ENCODE measurements at regions of chr11 and their contacts with region 1.

Region 1: GRCh38 chr11:111538407-111539114 is 2.0 kb upstream of the LAYN start:
- DNase-seq: peak; percentile 90
- ATAC-seq: peak; percentile 83
- H3K4me3 ChIP-seq: no peak overlapping the region
- H3K27ac ChIP-seq: peak overlapping the region; percentile 34
- H3K4me1 ChIP-seq: peaks cover 45% of the 10 kb centered on the region
- H3K27me3 ChIP-seq: no peaks in the 10 kb centered on the region
- CTCF ChIP-seq: no peak

Region 2: GRCh38 chr11:111162305-111162704 is 376.3 kb before region 1 on chr11:
- CTCF ChIA-PET with region 1: no interaction called
- POLR2A ChIA-PET with region 1: no interaction called
- intact Hi-C with region 1: no loop called
- DNase-seq: no peak
- ATAC-seq: no peak
- H3K4me3 ChIP-seq: no peak overlapping the region
- H3K27ac ChIP-seq: no peak overlapping the region
- H3K4me1 ChIP-seq: no peaks in the 10 kb centered on the region
- H3K27me3 ChIP-seq: peaks cover 72% of the 10 kb centered on the region
- CTCF ChIP-seq: no peak

Region 3: GRCh38 chr11:111483431-111483830 is 55.1 kb before region 1 on chr11:
- CTCF ChIA-PET with region 1: no interaction called
- POLR2A ChIA-PET with region 1: no interaction called
- intact Hi-C with region 1: no loop called
- DNase-seq: no peak
- ATAC-seq: no peak
- H3K4me3 ChIP-seq: no peak overlapping the region
- H3K27ac ChIP-seq: no peak overlapping the region
- H3K4me1 ChIP-seq: no peaks in the 10 kb centered on the region
- H3K27me3 ChIP-seq: no peaks in the 10 kb centered on the region
- CTCF ChIP-seq: no peak

Region 4: DNA sequence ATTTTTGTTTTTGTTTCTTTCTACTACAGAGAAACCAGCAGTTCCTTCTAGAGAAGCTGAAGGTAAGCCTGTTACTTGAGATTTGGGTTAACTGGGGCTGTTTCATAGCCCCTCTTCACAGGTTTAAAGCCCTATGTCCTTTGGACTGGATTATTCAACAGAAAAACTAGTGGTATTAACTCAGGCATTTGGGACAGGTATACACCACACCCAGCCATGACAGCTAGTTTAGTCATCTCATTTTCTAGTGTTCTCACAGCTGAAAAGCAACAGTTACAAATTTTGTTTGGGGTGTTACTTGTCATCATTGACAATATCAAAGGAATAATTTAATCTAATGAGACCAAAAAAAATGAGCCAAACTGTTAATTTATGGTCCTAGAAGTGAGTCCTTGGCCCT is 16.0 kb after region 1 on chr11:
- CTCF ChIA-PET with region 1: interaction called, 4 read pairs
- POLR2A ChIA-PET with region 1: no interaction called
- intact Hi-C with region 1: loop called (anchors 1 kb)
- DNase-seq: peak; percentile 96
- ATAC-seq: peak; percentile 72
- H3K4me3 ChIP-seq: peak overlapping the region; percentile 51
- H3K27ac ChIP-seq: peak overlapping the region; percentile 95
- H3K4me1 ChIP-seq: peaks cover 57% of the 10 kb centered on the region
- H3K27me3 ChIP-seq: no peaks in the 10 kb centered on the region
- CTCF ChIP-seq: no peak

Measured in PC-3 (cell line).